ENCODE measurements at regions of chr17 and their contacts with region 1.

Region 1: GRCh38 chr17:63665527-63666214 is 34.3 kb downstream of the LIMD2 start:
- DNase-seq: no peak
- H3K4me3 ChIP-seq: no peak overlapping the region
- H3K4me3 Mint-ChIP-seq: no peak overlapping the region
- H3K27ac ChIP-seq: no peak overlapping the region
- H3K27ac Mint-ChIP-seq: peak overlapping the region in 4 of 8 donors; percentile 11 to 80 (median 69)
- H3K4me1 ChIP-seq: no peaks in the 10 kb centered on the region
- H3K4me1 Mint-ChIP-seq: peaks cover 7 to 14% (median 11%) of the 10 kb centered on the region in 3 donors
- H3K27me3 ChIP-seq: no peaks in the 10 kb centered on the region
- H3K27me3 Mint-ChIP-seq: no peaks in the 10 kb centered on the region

Region 2: GRCh38 chr17:63790057-63790456 is 124.4 kb after region 1 on chr17:
- CTCF ChIA-PET with region 1: no interaction called
- POLR2A ChIA-PET with region 1: interaction called, 11 read pairs
- DNase-seq: no peak
- H3K4me3 ChIP-seq: no peak overlapping the region
- H3K4me3 Mint-ChIP-seq: no peak overlapping the region
- H3K27ac ChIP-seq: no peak overlapping the region
- H3K27ac Mint-ChIP-seq: peak overlapping the region in 1 of 8 donors; percentile 11
- H3K4me1 ChIP-seq: no peaks in the 10 kb centered on the region
- H3K4me1 Mint-ChIP-seq: peaks cover 7 to 12% (median 9%) of the 10 kb centered on the region in 3 donors
- H3K27me3 ChIP-seq: no peaks in the 10 kb centered on the region
- H3K27me3 Mint-ChIP-seq: no peaks in the 10 kb centered on the region